ENCODE measurements at regions of chr22 and their contacts with region 1.

Region 1: DNA sequence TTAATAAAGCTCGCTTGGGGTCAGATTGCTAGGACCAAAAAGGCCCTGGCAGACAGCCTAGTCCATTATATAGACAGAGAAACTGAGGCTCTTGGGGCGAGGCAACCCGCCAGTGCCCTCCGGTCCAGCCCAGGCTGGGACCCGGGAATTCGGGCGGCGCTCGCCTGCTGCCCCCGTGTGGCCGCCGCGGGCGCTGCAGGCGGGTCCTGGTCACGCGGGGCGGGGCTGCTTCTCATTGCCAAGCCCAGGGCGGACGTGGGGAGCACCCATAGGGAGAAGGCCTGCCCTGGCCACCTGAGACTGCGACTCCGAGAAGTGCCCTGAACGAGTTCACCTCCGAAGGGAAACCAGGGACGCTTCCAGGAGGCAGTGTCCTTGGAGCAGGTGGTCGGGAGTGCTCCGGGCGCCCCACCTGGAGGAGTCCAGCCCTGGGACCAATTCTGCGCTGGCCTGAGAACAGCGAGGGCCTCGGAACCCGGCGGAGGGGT is 36.0 kb upstream of the CSNK1E start:
- DNase-seq: peak; percentile 73 to 83
- ATAC-seq: peak; percentile 80 to 93 (median 86)
- H3K4me3 ChIP-seq: no peak overlapping the region
- H3K27ac ChIP-seq: no peak overlapping the region
- H3K4me1 ChIP-seq: peaks cover 2% of the 10 kb centered on the region
- H3K27me3 ChIP-seq: no peaks in the 10 kb centered on the region
- CTCF ChIP-seq: peak; percentile 99

Region 2: GRCh38 chr22:38051900-38052862 is 301.0 kb before region 1 on chr22:
- intact Hi-C with region 1: loop called in 1 of 2 experiments (anchors 5 kb)
- DNase-seq: peak; percentile 77 to 90
- ATAC-seq: peak; percentile 77 to 84 (median 82)
- H3K4me3 ChIP-seq: no peak overlapping the region
- H3K27ac ChIP-seq: no peak overlapping the region
- H3K4me1 ChIP-seq: peaks cover 3% of the 10 kb centered on the region
- H3K27me3 ChIP-seq: no peaks in the 10 kb centered on the region
- CTCF ChIP-seq: peak; percentile 89

Region 3: DNA sequence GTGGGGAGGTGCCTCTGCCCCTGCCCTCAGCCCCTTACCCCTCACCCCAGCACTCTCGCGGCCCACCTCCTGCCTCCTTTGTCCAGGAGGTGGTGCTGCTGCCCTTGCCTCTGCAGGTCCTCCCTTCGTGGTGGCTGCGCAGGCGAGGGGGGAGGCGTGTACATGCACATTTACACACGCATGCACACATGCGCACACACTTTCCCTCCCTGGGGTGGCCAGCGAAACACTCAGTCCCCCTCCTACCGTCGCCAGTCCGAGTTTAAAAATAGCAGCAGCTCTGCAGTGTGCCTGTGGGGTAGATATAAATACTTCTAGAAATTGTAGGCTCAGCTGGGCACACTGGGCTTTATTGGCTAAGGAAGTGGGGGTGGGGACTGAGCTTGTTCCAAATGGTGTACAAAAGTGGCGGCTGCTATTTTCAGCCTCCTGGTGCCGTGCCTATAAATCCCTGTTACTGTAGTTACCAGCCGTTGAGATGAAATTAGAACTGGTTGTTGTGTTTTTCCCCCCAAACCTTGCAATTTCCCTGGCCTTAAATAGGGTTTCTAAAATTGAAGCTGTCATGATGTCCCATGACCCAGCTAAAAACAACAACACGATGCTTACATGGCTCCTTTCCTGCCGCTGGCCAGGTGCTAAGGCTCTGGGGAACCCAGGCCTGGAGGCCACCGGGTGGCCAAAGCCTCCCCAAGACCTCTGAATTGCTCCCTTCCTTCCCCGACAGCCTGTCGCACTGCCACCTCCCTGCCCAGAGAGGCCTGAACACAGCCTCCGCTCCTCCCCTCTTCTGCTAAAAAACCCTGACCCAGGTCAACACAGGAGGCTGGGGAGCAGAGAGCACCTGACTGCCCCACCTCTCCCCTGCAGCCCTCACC is 283.6 kb before region 1 on chr22:
- intact Hi-C with region 1: loop called in 1 of 2 experiments (anchors 10 kb)
- DNase-seq: peak; percentile 80 to 96
- ATAC-seq: peak; percentile 82 to 88 (median 86)
- H3K4me3 ChIP-seq: peak overlapping the region; percentile 63
- H3K27ac ChIP-seq: peak overlapping the region; percentile 95
- H3K4me1 ChIP-seq: peaks cover 55% of the 10 kb centered on the region
- H3K27me3 ChIP-seq: no peaks in the 10 kb centered on the region
- CTCF ChIP-seq: peak; percentile 59

Region 4: DNA sequence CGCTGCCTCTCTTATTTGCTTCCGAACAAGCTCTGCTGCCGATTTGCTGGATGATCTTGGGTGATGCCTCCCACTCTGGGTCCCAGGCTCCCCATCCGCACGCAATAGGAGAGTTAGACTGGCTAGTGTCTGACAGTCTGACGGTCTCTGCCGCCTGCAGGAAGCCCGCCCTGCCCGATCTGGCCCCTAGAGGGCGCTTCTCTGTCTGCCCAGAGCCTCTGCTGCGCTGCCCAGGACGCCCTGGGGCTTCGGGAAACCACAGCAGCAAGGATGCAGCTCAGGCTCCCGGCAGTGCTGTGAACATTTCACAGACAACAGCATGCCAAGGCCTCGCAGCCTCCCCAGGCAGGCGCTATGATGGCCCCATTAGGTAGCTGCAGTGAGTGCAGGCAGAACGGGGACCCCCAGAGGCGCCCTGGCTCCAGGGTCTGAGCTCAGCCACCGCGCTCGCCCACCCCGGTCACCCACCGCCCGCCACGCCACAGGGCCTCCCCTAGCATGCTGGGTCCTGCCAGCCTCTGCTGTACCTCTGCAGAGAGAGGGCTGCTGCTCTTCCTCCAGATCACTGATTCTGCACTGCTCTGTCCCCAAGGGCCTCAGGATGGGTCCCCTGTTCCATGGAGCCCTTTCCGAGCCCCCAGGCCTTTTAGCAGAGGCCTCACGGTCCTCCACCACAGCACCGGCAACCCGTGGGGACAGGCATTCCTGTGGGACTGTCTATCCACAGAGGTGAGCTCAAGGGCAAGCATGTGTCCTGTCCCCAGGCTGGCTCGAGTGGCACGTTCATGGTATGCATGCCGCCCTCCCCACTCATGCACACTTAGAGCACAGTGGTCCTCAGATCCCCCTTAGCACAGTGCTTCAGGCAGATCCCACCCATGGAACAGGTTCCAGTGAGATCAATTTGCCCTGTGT is 238.4 kb before region 1 on chr22:
- intact Hi-C with region 1: loop called in 1 of 2 experiments (anchors 2 kb)
- DNase-seq: peak; percentile 86 to 94
- ATAC-seq: peak; percentile 89 to 95 (median 90)
- H3K4me3 ChIP-seq: no peak overlapping the region
- H3K27ac ChIP-seq: no peak overlapping the region
- H3K4me1 ChIP-seq: no peaks in the 10 kb centered on the region
- H3K27me3 ChIP-seq: no peaks in the 10 kb centered on the region
- CTCF ChIP-seq: peak; percentile 88

Region 5: DNA sequence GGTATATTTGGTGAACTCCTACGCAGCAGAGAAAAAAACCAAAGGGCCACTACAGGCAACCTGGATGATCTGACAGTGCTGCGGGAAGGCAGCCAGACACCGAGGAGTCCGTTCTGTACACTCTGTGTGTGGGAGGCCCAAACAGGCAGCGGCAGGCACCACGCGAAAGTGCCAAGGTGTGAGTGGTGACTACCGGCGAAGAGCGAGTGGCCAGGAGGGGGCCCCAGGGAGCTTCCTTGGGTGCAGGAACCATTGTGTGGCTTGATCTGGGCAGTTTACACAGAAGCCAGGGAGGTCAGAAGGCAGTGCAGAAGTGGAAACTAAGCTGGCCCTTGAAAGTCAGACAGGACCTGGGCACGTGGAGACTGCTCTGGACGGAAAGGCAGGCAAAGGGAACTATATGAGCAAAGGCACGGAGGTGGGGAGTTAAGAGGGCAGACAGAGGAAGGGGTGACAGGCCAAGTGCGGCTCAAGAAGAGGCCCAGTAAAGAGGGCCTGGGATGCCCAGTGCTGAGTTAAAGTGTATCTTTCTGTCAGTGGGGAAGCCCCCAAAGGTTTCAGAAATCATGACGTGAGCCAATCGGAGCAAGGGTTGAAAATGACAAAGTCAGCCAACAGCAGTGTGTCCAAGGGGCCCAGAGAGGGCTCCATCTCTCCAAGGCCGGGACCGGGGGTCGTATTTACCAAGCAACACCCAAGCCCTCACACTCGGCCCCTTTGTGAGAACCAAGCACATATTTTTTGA is 91.0 kb before region 1 on chr22:
- intact Hi-C with region 1: loop called (anchors 5 kb)
- DNase-seq: peak; percentile 57 to 79
- ATAC-seq: peak; percentile 71 to 83 (median 79)
- H3K4me3 ChIP-seq: no peak overlapping the region
- H3K27ac ChIP-seq: peak overlapping the region; percentile 57
- H3K4me1 ChIP-seq: peaks cover 64% of the 10 kb centered on the region
- H3K27me3 ChIP-seq: no peaks in the 10 kb centered on the region
- CTCF ChIP-seq: peak; percentile 52